ENCODE measurements at regions of chr5 and their contacts with region 1.

Region 1: GRCh38 chr5:59025734-59026133 is 442.9 kb downstream of the RAB3C start:
- DNase-seq: no peak
- H3K4me3 ChIP-seq: no peak overlapping the region
- H3K27ac ChIP-seq: peak overlapping the region in 3 of 4 donors; percentile 59 to 77 (median 75)
- H3K4me1 ChIP-seq: peaks cover 0 to 50% (median 40%) of the 10 kb centered on the region in 4 donors
- H3K27me3 ChIP-seq: no peaks in the 10 kb centered on the region
- CTCF ChIP-seq: no peak
- EP300 ChIP-seq: peak in 3 of 4 donors; percentile 45 to 87 (median 79)
- POLR2A ChIP-seq: no peak

Region 2: GRCh38 chr5:59777028-59777427 is 751.3 kb after region 1 on chr5:
- intact Hi-C with region 1: loop called (anchors 5 kb)
- DNase-seq: no peak
- H3K4me3 ChIP-seq: no peak overlapping the region
- H3K27ac ChIP-seq: peak overlapping the region in 3 of 4 donors; percentile 63 to 69 (median 65)
- H3K4me1 ChIP-seq: peaks cover 0 to 27% (median 14%) of the 10 kb centered on the region in 4 donors
- H3K27me3 ChIP-seq: no peaks in the 10 kb centered on the region
- CTCF ChIP-seq: no peak
- EP300 ChIP-seq: no peak
- POLR2A ChIP-seq: no peak

Measured in sigmoid colon (tissue), 7 donors.